ENCODE measurements at regions of chr5 and their contacts with region 1.

Region 1: GRCh38 chr5:6820851-6821479 is 107.7 kb downstream of the TENT4A start:
- DNase-seq: peak; percentile 74
- ATAC-seq: peak; percentile 70
- H3K4me3 Mint-ChIP-seq: no peak overlapping the region
- H3K27ac Mint-ChIP-seq: no peak overlapping the region
- H3K4me1 Mint-ChIP-seq: peaks cover 4% of the 10 kb centered on the region
- H3K27me3 Mint-ChIP-seq: peaks cover 22% of the 10 kb centered on the region

Region 2: GRCh38 chr5:6840136-6840793 is 19.3 kb after region 1 on chr5:
- CTCF ChIA-PET with region 1: interaction called, 13 read pairs
- POLR2A ChIA-PET with region 1: no interaction called
- DNase-seq: no peak
- ATAC-seq: no peak
- H3K4me3 Mint-ChIP-seq: no peak overlapping the region
- H3K27ac Mint-ChIP-seq: no peak overlapping the region
- H3K4me1 Mint-ChIP-seq: peaks cover 5% of the 10 kb centered on the region
- H3K27me3 Mint-ChIP-seq: peaks cover 8% of the 10 kb centered on the region

Region 3: GRCh38 chr5:6926491-6927038 is 105.6 kb after region 1 on chr5:
- CTCF ChIA-PET with region 1: no interaction called
- POLR2A ChIA-PET with region 1: no interaction called
- DNase-seq: no peak
- ATAC-seq: no peak
- H3K4me3 Mint-ChIP-seq: no peak overlapping the region
- H3K27ac Mint-ChIP-seq: no peak overlapping the region
- H3K4me1 Mint-ChIP-seq: no peaks in the 10 kb centered on the region
- H3K27me3 Mint-ChIP-seq: no peaks in the 10 kb centered on the region

Measured in activated CD8-positive, alpha-beta T cell treated with anti-CD3 and anti-CD28 coated beads, Interleukin-2, amount 10 ng/mL, durations not matched to agents 7 days and 5 days (primary cell).